Panc1 (cell line): ENCODE measurements at regions of chr2 and their contacts with region 1.

Region 1: DNA sequence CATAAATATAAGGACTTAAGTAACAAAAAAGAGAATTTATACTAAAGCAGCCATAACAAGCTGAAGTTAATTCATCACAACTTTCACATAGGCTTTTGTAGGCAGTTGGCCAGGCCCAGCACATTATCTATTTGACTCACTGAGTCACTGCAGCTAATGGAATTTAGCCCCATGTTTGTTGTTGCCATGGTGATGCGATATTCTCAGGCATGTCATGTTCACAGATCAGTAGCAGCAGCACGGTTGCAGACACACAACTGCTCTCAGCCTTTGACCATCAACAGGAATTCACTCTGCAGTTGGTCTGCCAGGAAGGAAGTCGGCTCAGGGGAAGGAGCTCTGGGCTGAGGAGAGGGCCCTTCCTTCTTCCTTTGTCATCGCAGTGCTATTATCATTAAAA is 639.8 kb downstream of the TMEM182 start:
- DNase-seq: no peak
- ATAC-seq: no peak
- H3K4me3 ChIP-seq: no peak overlapping the region
- H3K27ac ChIP-seq: no peak overlapping the region
- H3K4me1 ChIP-seq: no peaks in the 10 kb centered on the region
- H3K27me3 ChIP-seq: no peaks in the 10 kb centered on the region
- CTCF ChIP-seq: no peak

Region 2: DNA sequence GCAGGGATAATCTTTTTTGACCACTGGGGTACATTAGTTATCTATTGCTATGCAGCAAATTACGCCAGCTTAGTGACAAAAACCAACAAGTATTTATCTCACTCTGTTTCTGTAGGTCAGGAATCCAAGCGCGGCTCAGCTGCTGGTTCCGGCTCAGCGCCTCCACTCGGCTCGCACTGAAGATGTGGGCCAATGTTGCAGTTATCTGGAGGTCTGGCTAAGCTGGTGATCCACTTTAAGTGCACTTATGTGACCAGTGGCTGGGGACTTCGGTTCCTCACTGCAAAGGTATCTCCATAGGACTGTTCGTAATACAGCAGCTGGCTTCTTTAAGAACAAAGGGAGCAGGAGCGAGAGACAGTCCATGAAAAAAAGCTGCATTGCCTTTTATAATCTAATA is 47.8 kb before region 1 on chr2:
- CTCF ChIA-PET with region 1: no interaction called
- POLR2A ChIA-PET with region 1: no interaction called
- in situ Hi-C with region 1: no loop called
- intact Hi-C with region 1: no loop called
- DNase-seq: no peak
- ATAC-seq: no peak
- H3K4me3 ChIP-seq: no peak overlapping the region
- H3K27ac ChIP-seq: no peak overlapping the region
- H3K4me1 ChIP-seq: no peaks in the 10 kb centered on the region
- H3K27me3 ChIP-seq: no peaks in the 10 kb centered on the region
- CTCF ChIP-seq: no peak

Region 3: GRCh38 chr2:103921161-103921560 is 519.5 kb after region 1 on chr2:
- CTCF ChIA-PET with region 1: no interaction called
- POLR2A ChIA-PET with region 1: no interaction called
- in situ Hi-C with region 1: no loop called
- intact Hi-C with region 1: loop called (anchors 10 kb)
- DNase-seq: no peak
- ATAC-seq: no peak
- H3K4me3 ChIP-seq: no peak overlapping the region
- H3K27ac ChIP-seq: no peak overlapping the region
- H3K4me1 ChIP-seq: no peaks in the 10 kb centered on the region
- H3K27me3 ChIP-seq: no peaks in the 10 kb centered on the region
- CTCF ChIP-seq: no peak